Dorsolateral prefrontal cortex (tissue), 120 donors: ENCODE measurements at regions of chr12 and their contacts with region 1.

Region 1: GRCh38 chr12:111753144-111753881 is 13.4 kb upstream of the ALDH2 start:
- DNase-seq: peak in 8 of 10 donors; percentile 47 to 76 (median 57)
- H3K4me3 ChIP-seq: no peak overlapping the region
- H3K27ac ChIP-seq: peak overlapping the region in 11 of 59 donors; percentile 0 to 63 (median 32)
- H3K27me3 ChIP-seq: no peaks in the 10 kb centered on the region
- CTCF ChIP-seq: peak; percentile 21 to 92 (median 76)

Region 2: DNA sequence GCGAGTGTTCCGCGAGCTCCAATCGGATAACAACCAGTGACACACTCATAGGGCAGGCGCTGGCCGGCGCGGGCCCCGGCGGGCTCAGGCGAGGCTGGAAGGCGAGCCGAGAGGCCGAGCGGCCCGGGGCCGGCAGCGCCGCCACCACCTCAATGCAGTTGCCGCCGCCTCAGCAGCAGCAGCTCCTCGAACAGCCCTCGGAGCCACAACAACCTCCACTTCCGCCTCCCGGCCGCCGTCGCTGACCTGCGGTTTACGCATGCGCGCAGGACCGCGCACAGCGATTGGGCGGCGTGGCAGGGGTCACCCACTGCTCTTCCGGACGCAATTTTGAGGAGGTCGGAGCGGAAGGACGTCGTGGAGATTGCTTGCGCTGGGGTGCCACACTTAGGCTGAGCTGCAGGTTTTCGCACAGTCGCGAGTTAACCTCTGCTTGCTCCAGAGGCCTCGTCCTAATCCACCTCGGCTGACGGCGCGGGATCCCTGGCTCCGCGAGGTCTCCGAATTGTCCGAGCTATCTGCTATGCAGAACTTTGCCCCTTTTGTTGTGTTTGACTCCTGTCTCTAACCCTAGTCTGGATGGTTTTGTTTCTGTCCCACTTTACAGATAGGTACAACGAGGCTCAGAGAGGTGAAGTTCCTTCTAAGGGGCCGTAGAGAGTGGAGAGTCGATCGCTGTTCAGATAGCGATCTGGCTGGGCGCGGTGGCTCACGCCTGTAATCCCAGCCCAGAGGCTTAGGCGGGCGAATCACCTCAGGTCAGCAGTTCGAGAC is 67.4 kb before region 1 on chr12 and contains the starts of genes ACAD10 and BRAP:
- intact Hi-C with region 1: loop called in 1 of 2 experiments (anchors 5 kb)
- DNase-seq: peak; percentile 83 to 95 (median 89)
- H3K4me3 ChIP-seq: peak within 1 kb of the TSS; percentile 64 to 100 (median 96)
- H3K27ac ChIP-seq: peak within 1 kb of the TSS; percentile 5 to 93 (median 80)
- H3K27me3 ChIP-seq: no peaks in the 10 kb centered on the region
- CTCF ChIP-seq: peak in 40 of 56 donors; percentile 6 to 63 (median 40)
- total RNA-seq, gene ACAD10: 19.3 to 49.9 (median 31.8) TPM
- total RNA-seq, gene BRAP: 20.6 to 31.0 (median 25.6) TPM

Region 3: GRCh38 chr12:111799758-111800157 is 46.4 kb after region 1 on chr12:
- intact Hi-C with region 1: no loop called
- DNase-seq: peak in 1 of 10 donors; percentile 12
- H3K4me3 ChIP-seq: no peak overlapping the region
- H3K27ac ChIP-seq: no peak overlapping the region
- H3K27me3 ChIP-seq: no peaks in the 10 kb centered on the region
- CTCF ChIP-seq: no peak

Region 4: DNA sequence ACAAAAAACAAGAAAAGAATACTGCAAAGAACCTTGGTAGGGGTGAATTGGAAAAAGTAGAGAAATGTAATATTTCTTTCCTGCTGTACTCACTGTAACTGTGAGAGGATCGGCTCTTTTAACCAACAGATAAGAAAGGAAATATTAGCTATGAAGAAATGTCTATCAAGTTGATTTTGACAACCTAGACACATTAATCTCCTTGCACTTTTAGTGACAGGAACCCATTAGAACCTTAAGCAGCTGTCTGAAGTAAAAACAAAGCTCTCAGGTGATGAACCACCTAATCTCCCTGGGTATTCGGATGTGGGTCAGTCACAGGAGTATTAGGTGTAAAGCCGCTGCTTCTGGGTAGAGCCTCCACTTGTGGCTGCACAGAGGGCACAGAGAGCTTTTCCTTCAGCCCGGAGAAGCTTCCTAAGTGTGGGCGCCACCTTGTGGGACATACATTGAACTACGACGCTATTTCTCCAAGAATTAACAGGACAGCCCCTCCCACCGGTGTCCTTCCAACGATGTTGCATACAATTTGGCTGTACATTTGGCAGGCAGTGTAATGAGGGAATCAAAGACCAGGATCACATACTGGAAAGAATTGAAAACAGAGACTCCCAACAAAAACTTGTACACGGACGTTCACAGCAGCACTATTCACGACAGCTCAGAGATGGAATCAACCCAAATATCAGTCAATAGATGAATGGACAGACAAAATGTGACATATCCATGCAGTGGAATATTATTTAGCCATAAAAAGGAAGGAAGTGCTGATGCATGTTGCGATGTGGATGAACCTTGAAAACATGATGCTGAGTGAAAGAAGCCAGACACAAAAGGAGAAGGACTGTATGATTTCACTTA is 59.8 kb after region 1 on chr12:
- intact Hi-C with region 1: loop called (anchors 2 to 5 kb)
- DNase-seq: peak in 8 of 10 donors; percentile 57 to 78 (median 70)
- H3K4me3 ChIP-seq: no peak overlapping the region
- H3K27ac ChIP-seq: peak overlapping the region in 7 of 59 donors; percentile 1 to 33 (median 25)
- H3K27me3 ChIP-seq: no peaks in the 10 kb centered on the region
- CTCF ChIP-seq: peak; percentile 44 to 92 (median 82)